Psoas muscle (tissue), 8 donors: ENCODE measurements at regions of chr15 and their contacts with region 1.

Region 1: GRCh38 chr15:78437762-78438302 is at the start of gene IREB2:
- DNase-seq: peak; percentile 97 to 99
- ATAC-seq: peak; percentile 96
- H3K4me3 ChIP-seq: peak within 1 kb of the TSS; percentile 97
- H3K27ac ChIP-seq: peak within 1 kb of the TSS; percentile 97
- H3K4me1 ChIP-seq: peaks cover 36% of the 10 kb centered on the region
- H3K27me3 ChIP-seq: no peaks in the 10 kb centered on the region
- CTCF ChIP-seq: no peak
- total RNA-seq, gene IREB2: 29.2 to 46.5 (median 42.9) TPM

Region 2: DNA sequence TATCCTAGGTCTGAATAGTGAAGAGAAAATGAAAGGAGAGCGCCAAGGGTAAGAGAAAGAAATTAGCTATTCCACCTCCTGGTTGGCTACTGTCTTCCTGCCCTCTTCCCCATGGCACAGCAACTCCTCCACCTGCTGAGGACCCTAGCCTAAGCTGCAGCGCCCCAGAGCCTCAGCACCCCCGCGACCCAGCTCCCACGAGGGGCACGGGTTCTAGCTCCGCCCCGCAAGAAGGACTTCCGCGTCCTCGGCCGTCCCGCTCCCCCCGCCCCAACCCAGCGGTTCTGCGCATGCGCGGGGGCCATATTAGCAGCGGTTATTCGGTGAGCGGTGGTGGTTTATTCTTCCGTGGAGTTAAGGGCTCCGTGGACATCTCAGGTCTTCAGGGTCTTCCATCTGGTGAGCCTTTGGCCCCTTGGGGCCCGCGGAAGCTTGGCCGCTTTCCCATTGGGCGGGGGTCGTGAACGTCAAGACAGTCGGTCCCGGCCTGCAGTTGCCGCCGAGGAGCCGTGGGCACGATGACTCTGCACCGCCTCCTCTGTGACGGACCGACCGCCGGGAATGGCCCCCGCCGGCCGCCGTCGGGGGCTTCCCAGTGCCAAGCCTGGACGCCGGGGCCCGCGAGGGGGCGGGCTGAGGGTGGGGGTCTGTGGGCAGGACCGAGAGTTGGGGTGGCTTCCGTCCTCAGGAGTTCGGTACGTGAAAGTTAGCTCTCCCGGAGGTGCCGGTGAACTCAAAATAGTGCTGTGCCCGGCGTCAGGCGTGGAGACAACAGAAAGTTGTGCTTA is 102.5 kb after region 1 on chr15 and contains the start of gene PSMA4:
- intact Hi-C with region 1: loop called in 1 of 2 experiments (anchors 5 kb)
- DNase-seq: peak; percentile 95 to 96
- ATAC-seq: peak; percentile 95 to 96 (median 96)
- H3K4me3 ChIP-seq: peak within 1 kb of the TSS; percentile 80
- H3K27ac ChIP-seq: peak within 1 kb of the TSS; percentile 96
- H3K4me1 ChIP-seq: peaks cover 11% of the 10 kb centered on the region
- H3K27me3 ChIP-seq: no peaks in the 10 kb centered on the region
- CTCF ChIP-seq: peak; percentile 41
- total RNA-seq, gene PSMA4: 94.3 to 227 (median 176) TPM